ENCODE measurements at regions of chrX and their contacts with region 1.

Region 1: GRCh38 chrX:19785647-19786046 is 101.8 kb downstream of the SH3KBP1 start:
- DNase-seq: no peak
- H3K4me3 ChIP-seq: no peak overlapping the region
- H3K27ac ChIP-seq: no peak overlapping the region
- H3K4me1 ChIP-seq: no peaks in the 10 kb centered on the region
- H3K27me3 ChIP-seq: peaks cover 0 to 15% of the 10 kb centered on the region in 2 donors
- CTCF ChIP-seq: no peak
- POLR2A ChIP-seq: no peak

Region 2: GRCh38 chrX:19772826-19773628 is 12.6 kb before region 1 on chrX:
- intact Hi-C with region 1: loop called (anchors 1 kb)
- DNase-seq: no peak
- H3K4me3 ChIP-seq: no peak overlapping the region
- H3K27ac ChIP-seq: peak overlapping the region; percentile 13 to 48
- H3K4me1 ChIP-seq: no peaks in the 10 kb centered on the region
- H3K27me3 ChIP-seq: peaks cover 0 to 10% of the 10 kb centered on the region in 2 donors
- CTCF ChIP-seq: no peak
- POLR2A ChIP-seq: no peak

Measured in breast epithelium (tissue), 4 donors.